WTC11 (cell line): ENCODE measurements at regions of chr12 and their contacts with region 1.

Region 1: GRCh38 chr12:113152835-113153814 is 3.6 kb downstream of the CFAP73 start:
- DNase-seq: peak; percentile 72
- ATAC-seq: peak; percentile 49
- H3K4me3 Mint-ChIP-seq: peak overlapping the region; percentile 67
- H3K27ac Mint-ChIP-seq: no peak overlapping the region
- H3K4me1 Mint-ChIP-seq: peaks cover 21% of the 10 kb centered on the region
- H3K27me3 Mint-ChIP-seq: peaks cover 58% of the 10 kb centered on the region
- CTCF ChIP-seq: no peak

Region 2: GRCh38 chr12:113098446-113098896 is 54.7 kb before region 1 on chr12:
- CTCF ChIA-PET with region 1: interaction called, 27 read pairs
- POLR2A ChIA-PET with region 1: interaction called, 3 read pairs
- DNase-seq: peak; percentile 91
- ATAC-seq: peak; percentile 91
- H3K4me3 Mint-ChIP-seq: no peak overlapping the region
- H3K27ac Mint-ChIP-seq: peak overlapping the region; percentile 95
- H3K4me1 Mint-ChIP-seq: peaks cover 9% of the 10 kb centered on the region
- H3K27me3 Mint-ChIP-seq: no peaks in the 10 kb centered on the region
- CTCF ChIP-seq: peak; percentile 84; the same call in 1 of the 2 replicates

Region 3: GRCh38 chr12:113103756-113104450 is 49.2 kb before region 1 on chr12:
- CTCF ChIA-PET with region 1: interaction called, 27 read pairs
- POLR2A ChIA-PET with region 1: interaction called, 3 read pairs
- DNase-seq: peak; percentile 85
- ATAC-seq: peak; percentile 95
- H3K4me3 Mint-ChIP-seq: peak overlapping the region; percentile 71
- H3K27ac Mint-ChIP-seq: no peak overlapping the region
- H3K4me1 Mint-ChIP-seq: peaks cover 2% of the 10 kb centered on the region
- H3K27me3 Mint-ChIP-seq: no peaks in the 10 kb centered on the region; the same call in 1 of the 2 replicates
- CTCF ChIP-seq: no peak